ENCODE measurements at regions of chr5 and their contacts with region 1.

Region 1: DNA sequence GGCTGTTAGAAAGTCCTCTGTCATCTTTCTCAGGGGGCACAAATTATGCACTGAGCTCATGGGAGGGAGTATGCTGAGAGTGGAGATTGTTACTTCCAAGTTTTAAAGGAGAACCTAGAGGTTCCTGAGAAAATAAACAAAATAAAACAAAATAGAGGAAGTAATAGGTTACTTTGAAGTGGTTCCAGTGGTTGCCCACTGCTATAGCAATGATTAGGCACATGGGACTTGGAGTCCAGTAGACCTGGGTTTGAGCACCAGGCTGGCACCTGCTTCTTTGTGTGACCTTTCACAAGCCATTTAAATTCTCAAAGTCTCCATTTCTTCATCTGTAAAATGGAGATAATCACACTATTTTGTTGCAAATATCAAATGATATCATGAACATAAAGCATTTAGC is 13.8 kb upstream of the CDC23 start:
- DNase-seq: no peak
- H3K4me3 ChIP-seq: no peak overlapping the region
- H3K27ac ChIP-seq: no peak overlapping the region
- H3K4me1 ChIP-seq: peaks cover 0 to 15% (median 5%) of the 10 kb centered on the region in 3 donors
- H3K27me3 ChIP-seq: no peaks in the 10 kb centered on the region
- CTCF ChIP-seq: no peak
- POLR2A ChIP-seq: no peak

Region 2: GRCh38 chr5:138185957-138186447 is 40.9 kb before region 1 on chr5:
- intact Hi-C with region 1: no loop called
- DNase-seq: no peak
- H3K4me3 ChIP-seq: no peak overlapping the region
- H3K27ac ChIP-seq: no peak overlapping the region
- H3K4me1 ChIP-seq: no peaks in the 10 kb centered on the region
- H3K27me3 ChIP-seq: no peaks in the 10 kb centered on the region
- CTCF ChIP-seq: no peak
- POLR2A ChIP-seq: no peak

Region 3: DNA sequence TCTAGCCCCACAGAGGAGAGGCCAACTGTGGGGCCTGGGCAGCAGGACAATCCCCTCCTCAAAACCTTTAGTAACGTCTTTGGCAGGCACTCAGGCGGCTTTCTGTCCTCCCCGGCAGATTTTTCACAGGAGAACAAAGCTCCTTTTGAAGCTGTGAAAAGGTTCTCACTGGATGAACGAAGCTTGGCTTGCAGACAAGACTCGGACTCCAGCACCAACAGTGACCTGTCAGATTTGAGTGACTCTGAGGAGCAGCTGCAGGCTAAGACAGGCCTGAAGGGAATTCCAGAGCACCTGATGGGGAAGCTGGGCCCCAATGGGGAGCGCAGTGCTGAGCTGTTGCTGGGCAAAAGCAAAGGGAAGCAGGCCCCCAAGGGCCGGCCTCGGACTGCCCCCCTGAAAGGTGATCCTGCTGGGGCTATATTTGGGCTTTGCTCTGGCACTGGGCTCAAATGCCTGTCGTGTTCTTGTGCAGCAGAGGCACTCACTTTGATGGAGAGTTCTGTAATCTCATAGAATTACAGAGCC is 165.0 kb after region 1 on chr5:
- intact Hi-C with region 1: loop called (anchors 10 kb)
- DNase-seq: no peak
- H3K4me3 ChIP-seq: no peak overlapping the region
- H3K27ac ChIP-seq: peak overlapping the region in 1 of 4 donors; percentile 25
- H3K4me1 ChIP-seq: no peaks in the 10 kb centered on the region
- H3K27me3 ChIP-seq: no peaks in the 10 kb centered on the region
- CTCF ChIP-seq: no peak
- POLR2A ChIP-seq: no peak

Measured in esophagus squamous epithelium (tissue), 5 donors.